ENCODE measurements at regions of chr3 and their contacts with region 1.

Region 1: GRCh38 chr3:179260949-179261765 is 10.2 kb upstream of the KCNMB3 start:
- DNase-seq: peak; percentile 75
- ATAC-seq: peak; percentile 88
- H3K4me3 Mint-ChIP-seq: peak overlapping the region; percentile 84
- H3K27ac Mint-ChIP-seq: peak overlapping the region; percentile 71
- H3K4me1 Mint-ChIP-seq: peaks cover 53% of the 10 kb centered on the region
- H3K27me3 Mint-ChIP-seq: no peaks in the 10 kb centered on the region
- CTCF ChIP-seq: no peak

Region 2: GRCh38 chr3:179236669-179237301 is 24.4 kb before region 1 on chr3:
- CTCF ChIA-PET with region 1: no interaction called
- POLR2A ChIA-PET with region 1: no interaction called
- intact Hi-C with region 1: loop called (anchors 5 kb)
- DNase-seq: no peak
- ATAC-seq: no peak
- H3K4me3 Mint-ChIP-seq: no peak overlapping the region
- H3K27ac Mint-ChIP-seq: no peak overlapping the region
- H3K4me1 Mint-ChIP-seq: peaks cover 8% of the 10 kb centered on the region
- H3K27me3 Mint-ChIP-seq: no peaks in the 10 kb centered on the region
- CTCF ChIP-seq: no peak

Region 3: GRCh38 chr3:179279837-179280236 is 18.7 kb after region 1 on chr3:
- CTCF ChIA-PET with region 1: no interaction called
- POLR2A ChIA-PET with region 1: interaction called, 7 read pairs
- intact Hi-C with region 1: loop called (anchors 2 kb)
- DNase-seq: no peak
- ATAC-seq: no peak
- H3K4me3 Mint-ChIP-seq: no peak overlapping the region
- H3K27ac Mint-ChIP-seq: no peak overlapping the region
- H3K4me1 Mint-ChIP-seq: no peaks in the 10 kb centered on the region
- H3K27me3 Mint-ChIP-seq: peaks cover 6% of the 10 kb centered on the region
- CTCF ChIP-seq: no peak

Region 4: DNA sequence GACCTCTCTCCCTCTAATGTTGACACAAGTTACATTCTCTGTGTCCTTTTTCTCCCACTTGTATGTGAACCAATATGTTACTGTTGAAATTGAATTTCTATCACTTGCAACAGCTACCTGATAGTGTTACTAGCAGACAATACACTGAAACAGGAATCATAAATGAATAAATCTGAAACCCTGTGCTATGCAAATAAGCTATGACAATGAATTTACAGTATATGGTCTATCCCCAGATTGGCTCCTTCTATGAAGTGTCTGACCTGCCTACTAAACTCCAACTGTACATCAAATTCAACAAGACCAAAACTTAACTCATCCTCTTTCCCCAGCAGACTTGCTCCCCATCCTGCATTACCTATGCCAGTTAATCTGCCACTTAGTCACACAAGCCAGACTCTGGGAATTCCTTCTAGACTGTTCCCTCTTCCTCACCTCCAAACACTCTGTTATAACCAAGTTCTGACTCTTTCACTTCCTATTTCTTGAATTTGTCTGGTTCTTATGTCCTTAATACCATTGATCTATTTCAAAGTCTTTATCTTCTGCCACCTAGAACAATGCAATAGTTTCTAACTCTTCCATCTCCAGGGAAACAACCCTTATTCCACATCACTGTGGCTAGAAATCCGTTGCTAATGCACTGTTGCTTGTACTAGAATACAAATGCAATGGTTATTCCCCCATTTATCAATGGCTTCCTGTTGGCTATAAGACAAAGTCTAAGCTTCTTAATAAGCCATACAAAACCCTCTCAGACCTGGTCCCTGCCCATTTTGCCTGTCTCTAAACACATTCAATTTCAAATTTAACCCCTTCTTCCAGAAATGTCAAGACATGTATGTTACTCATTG is 48.3 kb after region 1 on chr3:
- CTCF ChIA-PET with region 1: no interaction called
- POLR2A ChIA-PET with region 1: interaction called, 6 read pairs
- intact Hi-C with region 1: loop called (anchors 2 kb)
- DNase-seq: no peak
- ATAC-seq: peak; percentile 92
- H3K4me3 Mint-ChIP-seq: no peak overlapping the region
- H3K27ac Mint-ChIP-seq: no peak overlapping the region
- H3K4me1 Mint-ChIP-seq: peaks cover 9% of the 10 kb centered on the region
- H3K27me3 Mint-ChIP-seq: no peaks in the 10 kb centered on the region
- CTCF ChIP-seq: no peak

Region 5: GRCh38 chr3:179451265-179452175 is 190.4 kb after region 1 on chr3 and contains the start of gene GNB4:
- CTCF ChIA-PET with region 1: no interaction called
- POLR2A ChIA-PET with region 1: no interaction called
- intact Hi-C with region 1: loop called (anchors 5 kb)
- DNase-seq: peak; percentile 74
- ATAC-seq: peak; percentile 88
- H3K4me3 Mint-ChIP-seq: peak within 1 kb of the TSS; percentile 92
- H3K27ac Mint-ChIP-seq: peak within 1 kb of the TSS; percentile 93
- H3K4me1 Mint-ChIP-seq: peaks cover 35% of the 10 kb centered on the region
- H3K27me3 Mint-ChIP-seq: no peaks in the 10 kb centered on the region
- CTCF ChIP-seq: no peak
- total RNA-seq, gene GNB4: 18.0 and 22.7 TPM in 2 replicates